ENCODE measurements at regions of chr3 and their contacts with region 1.

Region 1: GRCh38 chr3:128680602-128681368 is 30.2 kb upstream of the RPN1 start:
- DNase-seq: peak; percentile 97 to 100 (median 99)

Region 2: DNA sequence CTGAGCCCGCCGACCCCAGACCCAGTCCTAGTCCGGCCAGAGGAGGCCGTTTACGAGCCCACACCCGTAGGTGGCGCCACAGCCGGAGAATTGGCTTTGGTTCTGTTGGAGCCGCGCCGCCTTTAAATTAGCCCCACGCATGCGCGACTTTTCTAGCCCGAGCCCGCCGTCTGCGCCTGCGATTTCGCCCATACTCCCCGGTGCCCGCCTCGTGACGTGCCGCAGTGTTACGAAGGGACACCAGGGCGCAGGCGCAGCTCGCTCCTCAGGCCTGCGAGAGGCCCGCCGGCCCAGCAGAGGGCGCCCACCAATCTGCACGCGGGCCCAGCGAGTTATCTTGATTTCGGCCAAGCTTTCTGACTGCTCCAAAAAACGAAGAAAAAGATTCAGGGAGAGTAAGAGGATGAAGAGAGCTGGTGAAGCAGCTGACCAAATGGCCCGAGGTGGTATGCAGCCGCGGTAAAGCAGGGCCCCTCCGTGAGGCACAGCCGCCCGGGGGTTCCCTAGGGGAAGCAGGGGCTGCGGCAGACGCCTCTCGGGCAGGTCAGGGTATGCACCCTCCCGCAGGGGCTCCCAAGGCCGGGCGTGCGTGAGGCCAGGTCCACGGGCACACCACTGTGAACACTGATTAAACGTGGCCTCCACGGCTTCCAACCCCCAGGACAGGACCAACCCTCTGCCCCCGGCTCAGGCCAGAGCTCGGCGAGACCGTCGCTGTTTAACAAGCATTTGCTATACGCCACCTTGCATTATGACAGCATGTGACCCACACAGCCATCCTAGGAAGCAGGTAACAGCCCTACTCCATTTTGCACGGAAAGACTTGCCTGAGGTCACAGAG is 63.0 kb before region 1 on chr3:
- intact Hi-C with region 1: no loop called
- DNase-seq: peak; percentile 93 to 99 (median 98)

Region 3: DNA sequence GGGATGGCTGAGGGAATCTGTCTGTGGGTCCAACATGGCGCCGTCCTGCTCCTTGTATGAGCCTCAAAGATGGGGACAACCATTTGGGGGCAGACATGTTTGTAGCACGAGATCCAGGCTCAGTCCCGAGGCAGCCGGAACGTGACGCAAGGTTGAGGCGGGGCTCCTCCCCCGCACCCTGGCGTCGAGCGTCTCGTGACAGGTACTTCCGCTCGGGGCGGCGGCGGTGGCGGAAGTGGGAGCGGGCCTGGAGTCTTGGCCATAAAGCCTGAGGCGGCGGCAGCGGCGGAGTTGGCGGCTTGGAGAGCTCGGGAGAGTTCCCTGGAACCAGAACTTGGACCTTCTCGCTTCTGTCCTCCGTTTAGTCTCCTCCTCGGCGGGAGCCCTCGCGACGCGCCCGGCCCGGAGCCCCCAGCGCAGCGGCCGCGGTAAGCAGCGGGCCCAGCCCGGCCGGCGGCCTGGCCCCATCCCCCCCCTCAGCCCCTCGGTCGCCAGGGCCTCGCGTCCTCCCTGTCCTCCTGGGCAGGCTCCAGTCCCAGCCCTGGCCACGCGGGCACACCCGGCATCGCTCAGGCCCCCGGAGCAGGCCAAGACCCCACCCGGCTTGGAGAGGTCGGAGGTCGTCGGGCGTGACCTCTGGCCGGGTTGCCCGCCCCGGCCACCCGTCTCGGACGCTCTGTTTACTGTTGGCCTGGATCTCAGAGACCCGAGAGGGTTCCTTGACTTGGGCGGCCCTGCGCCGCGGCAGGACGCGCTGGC is 45.3 kb after region 1 on chr3 and contains the start of gene RAB7A:
- intact Hi-C with region 1: loop called (anchors 2 kb)
- DNase-seq: peak; percentile 95 to 99 (median 98)

Region 4: GRCh38 chr3:128794770-128795649 is 114.2 kb after region 1 on chr3:
- intact Hi-C with region 1: loop called (anchors 10 kb)
- DNase-seq: peak in 38 of 42 donors; percentile 16 to 85 (median 58)

Region 5: DNA sequence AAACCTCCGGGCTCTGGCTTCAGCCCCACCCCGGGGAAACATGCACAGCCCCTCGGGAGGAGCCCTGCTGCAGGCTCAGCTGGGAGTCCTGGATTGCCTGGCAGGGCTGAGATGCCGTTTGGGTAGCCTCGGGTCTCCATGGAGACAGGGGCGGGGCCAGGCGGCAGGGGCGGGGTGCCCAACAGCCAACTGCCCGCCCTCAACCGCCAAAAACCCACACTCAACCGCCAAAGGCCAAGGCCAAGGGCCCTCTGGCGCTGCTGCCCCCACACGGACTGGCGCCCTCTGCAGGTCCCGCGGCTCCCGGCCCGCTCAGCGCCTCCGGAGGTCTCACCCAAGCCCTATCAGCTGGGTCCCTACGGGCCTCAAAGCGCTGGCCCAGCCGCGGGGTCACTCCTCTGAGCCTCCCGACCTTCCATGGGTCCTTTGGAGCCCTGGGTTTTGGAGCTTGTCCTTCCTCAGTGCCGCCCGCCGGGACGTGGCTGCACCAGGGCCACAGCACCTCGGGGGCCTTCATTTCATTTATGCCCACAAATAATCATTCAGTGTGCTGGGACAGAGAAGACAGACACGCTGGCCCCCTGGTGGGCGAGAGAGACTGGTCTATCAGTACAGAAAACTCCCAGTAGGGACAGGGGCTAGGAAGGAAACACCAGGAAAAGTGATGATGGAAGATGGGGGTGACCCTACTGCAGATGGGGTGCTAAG is 165.1 kb after region 1 on chr3:
- intact Hi-C with region 1: loop called (anchors 10 kb)
- DNase-seq: peak; percentile 75 to 94 (median 86)

Region 6: GRCh38 chr3:129259612-129260452 is 579.0 kb after region 1 on chr3:
- intact Hi-C with region 1: no loop called
- DNase-seq: no peak